ENCODE measurements at regions of chr12 and their contacts with region 1.

Region 1: DNA sequence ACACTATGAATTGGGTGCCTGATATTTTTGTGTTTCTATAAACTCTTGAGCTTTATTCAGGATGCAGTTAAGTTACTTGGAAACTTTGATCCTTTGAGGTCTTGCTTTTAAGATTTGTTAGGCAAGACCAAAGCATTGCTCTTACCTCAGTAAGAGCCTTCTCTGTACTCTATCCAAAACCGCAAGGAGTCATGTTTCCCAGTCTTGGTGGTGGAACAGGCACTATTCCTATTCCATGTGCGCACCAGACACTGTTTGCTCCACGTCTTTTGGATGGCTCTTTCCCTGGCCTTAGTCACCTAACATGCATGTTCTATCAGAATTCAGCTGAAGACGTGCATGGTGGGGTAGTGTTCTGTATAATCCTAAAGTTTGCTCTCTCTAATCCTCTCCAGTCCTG is 23.5 kb downstream of the CSRP2 start:
- DNase-seq: no peak
- H3K4me3 ChIP-seq: no peak overlapping the region
- H3K27ac ChIP-seq: no peak overlapping the region
- H3K4me1 ChIP-seq: no peaks in the 10 kb centered on the region
- H3K27me3 ChIP-seq: no peaks in the 10 kb centered on the region
- CTCF ChIP-seq: no peak
- EP300 ChIP-seq: no peak
- POLR2A ChIP-seq: no peak
- RAD21 ChIP-seq: no peak

Region 2: GRCh38 chr12:76763743-76764675 is 91.3 kb before region 1 on chr12 and contains the start of gene ZDHHC17:
- CTCF ChIA-PET with region 1: no interaction called
- POLR2A ChIA-PET with region 1: no interaction called
- DNase-seq: peak; percentile 77 to 92
- H3K4me3 ChIP-seq: peak within 1 kb of the TSS; percentile 82 to 98 (median 94)
- H3K27ac ChIP-seq: peak within 1 kb of the TSS; percentile 100
- H3K4me1 ChIP-seq: peaks cover 2 to 14% (median 7%) of the 10 kb centered on the region in 4 experiments; a peak in 6 of 7 replicates
- H3K27me3 ChIP-seq: no peaks in the 10 kb centered on the region
- CTCF ChIP-seq: no peak
- EP300 ChIP-seq: no peak
- POLR2A ChIP-seq: peak; percentile 48 to 94
- RAD21 ChIP-seq: peak in 1 of 2 experiments; percentile 1; a peak in 1 of 4 replicates
- total RNA-seq, gene ZDHHC17: 27.6 and 32.1 TPM in 2 replicates

Region 3: DNA sequence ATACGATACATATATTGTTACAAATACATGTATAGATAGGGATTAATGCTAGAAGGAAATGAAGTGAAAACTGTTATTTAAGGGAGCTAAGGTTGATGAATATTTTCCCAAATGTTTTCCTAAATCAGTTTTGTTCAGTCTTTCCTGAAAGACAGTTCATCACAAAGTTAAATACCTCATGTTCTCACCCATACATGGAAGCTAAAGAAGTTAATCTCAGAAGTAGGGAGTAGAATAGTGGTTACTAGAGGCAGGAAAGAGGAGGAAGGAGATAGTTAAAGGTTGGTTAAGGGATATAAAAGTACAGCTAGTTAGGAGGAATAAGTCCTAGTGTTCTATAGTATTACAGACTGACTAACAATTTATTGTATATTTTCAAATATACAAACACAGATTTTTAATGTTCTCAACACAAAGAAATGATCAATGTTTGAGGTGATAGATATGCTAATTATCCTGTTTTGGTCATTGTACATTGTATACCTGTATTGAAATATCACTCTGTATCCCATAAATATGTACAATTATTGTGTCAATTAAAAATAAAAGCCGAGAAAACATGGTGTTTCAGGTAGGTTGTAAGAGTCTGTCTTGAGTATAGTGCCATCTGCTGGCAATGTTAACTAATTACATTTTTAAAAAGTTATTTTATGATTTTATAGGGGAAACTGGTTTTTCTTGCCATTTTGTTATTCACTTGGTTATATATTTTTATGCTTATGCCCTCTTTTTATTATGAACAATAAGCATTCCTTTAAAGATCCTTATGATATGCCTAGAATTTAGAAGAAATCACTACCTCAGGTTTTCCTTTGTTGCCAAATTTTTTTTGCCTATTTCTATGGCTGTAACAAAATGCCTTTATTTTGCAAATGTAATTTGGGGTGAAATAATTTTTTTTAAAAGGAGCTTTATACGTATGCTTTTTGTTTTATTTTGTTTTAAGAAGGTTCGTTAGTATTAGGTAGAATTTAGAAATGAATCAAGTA is 64.4 kb before region 1 on chr12:
- CTCF ChIA-PET with region 1: no interaction called
- POLR2A ChIA-PET with region 1: no interaction called
- DNase-seq: no peak
- H3K4me3 ChIP-seq: no peak overlapping the region
- H3K27ac ChIP-seq: no peak overlapping the region
- H3K4me1 ChIP-seq: peaks cover 0 to 2% (median 0%) of the 10 kb centered on the region in 4 experiments; a peak in 1 of 7 replicates
- H3K27me3 ChIP-seq: no peaks in the 10 kb centered on the region
- CTCF ChIP-seq: peak in 2 of 3 experiments; percentile 16 to 45; a peak in 2 of 4 replicates
- EP300 ChIP-seq: no peak
- POLR2A ChIP-seq: no peak
- RAD21 ChIP-seq: peak; percentile 67 to 81

Region 4: DNA sequence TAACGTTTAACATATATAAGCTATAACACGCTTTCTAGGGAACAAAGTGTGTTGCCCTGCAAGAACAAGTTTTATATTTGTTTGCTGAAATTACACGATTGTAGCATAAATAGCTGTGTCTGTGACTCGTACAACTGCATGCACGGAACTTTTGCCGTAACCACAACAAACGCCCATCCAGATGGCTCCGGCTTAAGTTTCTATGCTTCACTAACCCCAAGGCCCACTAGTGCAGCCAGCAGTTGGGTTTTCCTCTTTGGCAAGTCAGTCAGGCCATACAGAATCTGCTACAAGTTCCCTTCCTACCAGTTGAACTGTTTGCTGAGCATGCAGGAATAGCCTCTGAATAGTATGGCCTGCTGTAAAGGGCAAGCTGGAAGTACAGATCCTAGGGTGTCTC is 11.5 kb after region 1 on chr12:
- CTCF ChIA-PET with region 1: no interaction called
- POLR2A ChIA-PET with region 1: interaction called, 14 read pairs
- DNase-seq: no peak
- H3K4me3 ChIP-seq: no peak overlapping the region
- H3K27ac ChIP-seq: no peak overlapping the region
- H3K4me1 ChIP-seq: peaks cover 0 to 7% (median 3%) of the 10 kb centered on the region in 4 experiments; a peak in 4 of 7 replicates
- H3K27me3 ChIP-seq: no peaks in the 10 kb centered on the region
- CTCF ChIP-seq: no peak
- EP300 ChIP-seq: no peak
- POLR2A ChIP-seq: no peak
- RAD21 ChIP-seq: no peak